Heart left ventricle (tissue), 16 donors: ENCODE measurements at regions of chr20 and their contacts with region 1.

Region 1: GRCh38 chr20:22691369-22692118 is 107.2 kb upstream of the FOXA2 start:
- DNase-seq: peak; percentile 79 to 87 (median 84)
- ATAC-seq: peak; percentile 85 to 95 (median 92)
- H3K4me3 ChIP-seq: peak overlapping the region in 6 of 12 donors; percentile 18 to 32 (median 26)
- H3K27ac ChIP-seq: peak overlapping the region in 7 of 12 donors; percentile 16 to 61 (median 31)
- H3K4me1 ChIP-seq: peaks cover 0 to 25% (median 8%) of the 10 kb centered on the region in 12 donors
- H3K27me3 ChIP-seq: no peaks in the 10 kb centered on the region
- CTCF ChIP-seq: peak; percentile 88 to 96 (median 92)
- POLR2A ChIP-seq: no peak

Region 2: DNA sequence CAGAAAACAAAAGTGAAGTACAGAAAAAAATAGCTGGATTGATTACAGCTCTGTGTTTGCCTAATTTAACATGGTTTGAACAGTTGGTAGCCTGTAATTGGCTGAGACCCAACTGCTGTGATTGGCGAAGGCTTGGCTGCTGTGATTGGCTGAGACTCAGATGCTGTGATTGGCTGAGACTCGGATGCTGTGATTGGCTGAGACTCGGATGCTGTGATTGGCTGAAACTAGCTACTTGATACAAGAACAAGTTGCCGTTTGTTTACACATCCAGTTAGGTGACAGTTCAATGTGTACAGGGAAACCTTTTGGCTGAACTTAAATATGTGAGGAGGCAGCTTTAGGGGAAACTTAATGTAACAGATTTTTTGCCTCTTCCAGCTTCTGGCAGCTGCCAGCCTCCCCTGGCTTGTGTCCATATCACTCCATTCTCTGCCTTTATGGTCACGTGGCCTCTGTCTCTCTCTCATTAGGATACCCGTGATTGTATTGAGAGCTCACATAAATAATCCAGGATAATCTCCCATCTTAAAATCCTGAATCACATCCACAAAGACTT is 116.2 kb after region 1 on chr20:
- intact Hi-C with region 1: no loop called
- DNase-seq: no peak
- ATAC-seq: no peak
- H3K4me3 ChIP-seq: no peak overlapping the region
- H3K27ac ChIP-seq: no peak overlapping the region
- H3K4me1 ChIP-seq: peaks cover 0 to 22% (median 4%) of the 10 kb centered on the region in 12 donors
- H3K27me3 ChIP-seq: no peaks in the 10 kb centered on the region
- CTCF ChIP-seq: no peak
- POLR2A ChIP-seq: no peak

Region 3: DNA sequence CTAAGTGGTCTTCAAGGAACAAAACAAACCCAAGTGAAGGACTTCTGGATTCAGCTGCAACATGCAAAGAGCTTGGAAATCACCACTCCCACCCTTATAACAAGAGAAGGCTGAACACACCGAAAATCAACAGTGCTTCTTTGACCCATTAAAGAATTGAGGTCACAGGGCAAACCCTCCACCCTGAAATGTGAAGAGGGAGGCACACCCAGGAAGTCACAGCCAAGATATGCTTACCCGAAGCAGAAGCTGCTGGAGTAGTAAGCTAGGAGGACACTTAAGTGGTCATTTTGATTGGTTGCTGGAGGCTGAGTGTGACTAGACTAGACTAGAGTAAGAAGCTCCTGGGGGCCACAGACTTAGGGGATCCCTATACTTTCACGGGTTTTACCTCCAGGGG is 155.3 kb after region 1 on chr20:
- intact Hi-C with region 1: loop called in 1 of 10 experiments (anchors 5 kb)
- DNase-seq: no peak
- ATAC-seq: no peak
- H3K4me3 ChIP-seq: no peak overlapping the region
- H3K27ac ChIP-seq: no peak overlapping the region
- H3K4me1 ChIP-seq: peaks cover 0 to 5% (median 0%) of the 10 kb centered on the region in 12 donors
- H3K27me3 ChIP-seq: peaks cover 0 to 7% (median 0%) of the 10 kb centered on the region in 9 donors
- CTCF ChIP-seq: no peak
- POLR2A ChIP-seq: no peak

Region 4: DNA sequence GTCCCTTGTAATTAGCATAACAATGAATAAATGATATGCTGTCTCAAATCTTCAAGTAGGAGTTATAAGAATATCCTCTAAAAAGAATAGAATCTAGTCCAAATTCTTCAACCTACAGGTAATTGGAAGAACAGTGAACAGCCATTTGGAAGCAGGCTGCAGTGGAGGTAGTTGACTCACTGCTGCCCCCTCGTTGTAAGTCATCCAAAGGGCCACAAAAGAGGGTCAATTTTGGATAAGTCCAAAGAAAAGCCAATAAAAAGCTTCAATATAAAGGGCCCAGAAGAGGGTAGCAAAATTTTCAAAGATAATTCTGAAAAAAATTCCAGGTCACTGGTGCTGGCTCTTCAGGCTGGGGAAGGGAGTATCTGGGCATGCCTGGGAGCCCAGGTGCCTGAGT is 282.8 kb after region 1 on chr20:
- intact Hi-C with region 1: loop called in 3 of 10 experiments (anchors 5 to 10 kb)
- DNase-seq: no peak
- ATAC-seq: no peak
- H3K4me3 ChIP-seq: no peak overlapping the region
- H3K27ac ChIP-seq: no peak overlapping the region
- H3K4me1 ChIP-seq: peaks cover 0 to 20% (median 13%) of the 10 kb centered on the region in 12 donors
- H3K27me3 ChIP-seq: peaks cover 0 to 3% (median 0%) of the 10 kb centered on the region in 9 donors
- CTCF ChIP-seq: peak in 5 of 12 donors; percentile 7 to 27 (median 14)
- POLR2A ChIP-seq: no peak

Region 5: GRCh38 chr20:23043376-23043775 is 351.8 kb after region 1 on chr20:
- intact Hi-C with region 1: loop called in 9 of 10 experiments (anchors 2 to 5 kb)
- DNase-seq: no peak
- ATAC-seq: no peak
- H3K4me3 ChIP-seq: no peak overlapping the region
- H3K27ac ChIP-seq: no peak overlapping the region
- H3K4me1 ChIP-seq: peaks cover 0 to 34% (median 16%) of the 10 kb centered on the region in 12 donors
- H3K27me3 ChIP-seq: peaks cover 0 to 49% (median 14%) of the 10 kb centered on the region in 9 donors
- CTCF ChIP-seq: no peak
- POLR2A ChIP-seq: no peak

Region 6: GRCh38 chr20:23235173-23236027 is 543.9 kb after region 1 on chr20:
- intact Hi-C with region 1: loop called (anchors 1 to 5 kb)
- DNase-seq: peak; percentile 76 to 85 (median 76)
- ATAC-seq: peak; percentile 87 to 95 (median 95)
- H3K4me3 ChIP-seq: no peak overlapping the region
- H3K27ac ChIP-seq: no peak overlapping the region
- H3K4me1 ChIP-seq: peaks cover 0 to 4% (median 0%) of the 10 kb centered on the region in 12 donors
- H3K27me3 ChIP-seq: no peaks in the 10 kb centered on the region
- CTCF ChIP-seq: peak; percentile 80 to 93 (median 86)
- POLR2A ChIP-seq: no peak

Region 7: DNA sequence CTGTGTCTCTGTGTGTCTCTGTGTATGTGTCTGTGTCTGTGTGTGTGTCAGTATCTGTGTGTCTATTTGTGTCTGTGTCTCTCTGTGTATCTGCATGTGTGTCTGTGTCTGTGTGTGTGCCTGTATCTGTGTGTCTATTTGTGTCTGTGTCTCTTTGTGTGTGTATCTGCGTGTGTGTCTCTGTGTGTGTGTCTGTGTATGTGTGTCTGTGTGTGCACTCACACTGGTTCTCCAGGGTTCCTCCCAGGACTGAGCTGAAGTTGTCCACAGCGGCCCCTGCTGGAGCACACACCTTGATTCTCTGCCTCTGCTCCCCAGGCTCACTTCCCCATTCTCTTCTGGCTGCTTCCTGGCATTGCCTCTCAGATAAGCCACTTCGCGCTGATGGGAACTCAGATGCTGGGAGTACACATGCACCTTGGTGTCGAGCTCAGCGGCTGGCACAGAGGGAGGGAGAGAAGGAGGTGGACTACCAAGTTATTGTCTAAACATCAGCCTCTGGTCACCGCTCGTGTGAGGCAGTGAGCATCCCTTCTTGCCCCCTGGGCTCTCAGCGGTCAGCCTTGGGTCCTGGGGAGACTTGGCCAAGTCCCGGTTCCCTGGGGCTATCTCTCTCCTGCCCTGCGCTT is 554.1 kb after region 1 on chr20:
- intact Hi-C with region 1: loop called in 1 of 10 experiments (anchors 2 kb)
- DNase-seq: peak; percentile 67 to 80 (median 71)
- ATAC-seq: peak; percentile 40 to 83 (median 79)
- H3K4me3 ChIP-seq: no peak overlapping the region
- H3K27ac ChIP-seq: peak overlapping the region in 10 of 12 donors; percentile 23 to 75 (median 66)
- H3K4me1 ChIP-seq: peaks cover 0 to 37% (median 18%) of the 10 kb centered on the region in 12 donors
- H3K27me3 ChIP-seq: no peaks in the 10 kb centered on the region
- CTCF ChIP-seq: peak; percentile 42 to 69 (median 48)
- POLR2A ChIP-seq: no peak

Region 8: DNA sequence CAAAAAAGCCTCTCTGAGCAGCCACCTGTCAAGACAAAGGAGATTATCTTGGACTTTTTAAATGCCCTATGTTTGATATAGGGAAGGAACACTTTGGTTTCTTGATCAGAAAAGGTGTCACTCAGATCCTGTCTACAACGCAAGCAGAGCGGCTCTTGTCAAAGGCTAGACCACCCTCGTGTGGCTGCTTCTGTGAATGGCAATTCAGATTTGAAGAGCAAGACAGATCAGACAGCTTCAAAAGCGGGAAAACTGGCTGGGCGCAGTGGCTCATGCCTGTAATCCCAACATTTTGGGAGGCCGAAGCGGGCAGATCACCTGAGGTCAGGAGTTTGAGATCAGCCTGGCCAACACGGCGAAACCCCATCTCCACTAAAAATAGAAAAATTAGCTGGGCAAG is 649.0 kb after region 1 on chr20:
- intact Hi-C with region 1: loop called (anchors 1 to 5 kb)
- DNase-seq: peak; percentile 60 to 74 (median 72)
- ATAC-seq: peak in 3 of 4 donors; percentile 84 to 89 (median 87)
- H3K4me3 ChIP-seq: no peak overlapping the region
- H3K27ac ChIP-seq: no peak overlapping the region
- H3K4me1 ChIP-seq: peaks cover 0 to 5% (median 1%) of the 10 kb centered on the region in 12 donors
- H3K27me3 ChIP-seq: no peaks in the 10 kb centered on the region
- CTCF ChIP-seq: peak; percentile 52 to 86 (median 77)
- POLR2A ChIP-seq: no peak